ENCODE measurements at regions of chr1 and their contacts with region 1.

Region 1: GRCh38 chr1:20430355-20431175 is 55.4 kb downstream of the CAMK2N1 start:
- DNase-seq: no peak
- H3K4me3 ChIP-seq: no peak overlapping the region
- H3K27ac ChIP-seq: no peak overlapping the region
- H3K4me1 ChIP-seq: peaks cover 14% of the 10 kb centered on the region
- H3K27me3 ChIP-seq: no peaks in the 10 kb centered on the region
- CTCF ChIP-seq: peak; percentile 80 to 89

Region 2: GRCh38 chr1:19918057-19918456 is 512.5 kb before region 1 on chr1:
- CTCF ChIA-PET with region 1: no interaction called
- dilution Hi-C with region 1: no loop called
- in situ Hi-C with region 1: no loop called
- intact Hi-C with region 1: loop called (anchors 2 kb)
- DNase-seq: peak; percentile 60
- H3K4me3 ChIP-seq: no peak overlapping the region
- H3K27ac ChIP-seq: no peak overlapping the region
- H3K4me1 ChIP-seq: no peaks in the 10 kb centered on the region
- H3K27me3 ChIP-seq: no peaks in the 10 kb centered on the region
- CTCF ChIP-seq: peak; percentile 90 to 95

Region 3: DNA sequence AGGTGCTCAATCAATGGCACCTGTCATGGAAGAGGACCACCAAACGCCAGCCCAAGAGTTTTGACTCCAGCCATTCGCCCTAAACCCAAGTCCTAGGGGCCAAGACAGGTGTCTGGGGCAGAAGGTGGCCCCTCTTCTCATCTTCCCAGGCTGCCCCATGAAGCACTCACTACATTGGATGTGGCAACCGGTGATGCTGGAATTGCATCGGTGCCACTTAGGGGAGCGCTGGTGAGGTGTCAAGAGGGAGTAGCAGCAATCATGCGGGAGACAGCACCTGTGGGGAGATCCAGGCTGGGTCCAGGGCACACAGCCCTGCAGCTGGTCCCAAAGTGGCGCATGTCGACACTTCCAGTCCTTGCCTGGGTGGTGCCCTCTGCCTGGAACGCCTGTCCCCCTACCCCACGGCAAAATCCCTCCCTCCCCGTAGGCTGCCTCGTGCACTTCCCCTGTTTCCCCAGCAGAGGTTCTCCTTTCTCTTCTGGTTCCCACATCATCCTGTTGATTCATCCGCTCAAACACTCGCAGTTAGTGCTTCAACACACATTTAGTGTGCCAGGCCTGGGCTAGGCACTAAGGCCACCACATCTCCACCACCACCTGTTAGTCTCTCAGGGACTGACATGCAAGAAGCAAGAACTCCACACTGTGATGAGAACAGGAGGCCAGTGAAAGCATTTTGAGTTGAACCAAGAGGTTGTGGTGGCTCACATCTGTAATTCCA is 329.8 kb before region 1 on chr1:
- CTCF ChIA-PET with region 1: interaction called, 3 read pairs
- dilution Hi-C with region 1: no loop called
- in situ Hi-C with region 1: no loop called
- intact Hi-C with region 1: loop called (anchors 10 kb)
- DNase-seq: peak; percentile 57
- H3K4me3 ChIP-seq: no peak overlapping the region
- H3K27ac ChIP-seq: no peak overlapping the region
- H3K4me1 ChIP-seq: peaks cover 12% of the 10 kb centered on the region
- H3K27me3 ChIP-seq: no peaks in the 10 kb centered on the region
- CTCF ChIP-seq: peak; percentile 86 to 93

Region 4: DNA sequence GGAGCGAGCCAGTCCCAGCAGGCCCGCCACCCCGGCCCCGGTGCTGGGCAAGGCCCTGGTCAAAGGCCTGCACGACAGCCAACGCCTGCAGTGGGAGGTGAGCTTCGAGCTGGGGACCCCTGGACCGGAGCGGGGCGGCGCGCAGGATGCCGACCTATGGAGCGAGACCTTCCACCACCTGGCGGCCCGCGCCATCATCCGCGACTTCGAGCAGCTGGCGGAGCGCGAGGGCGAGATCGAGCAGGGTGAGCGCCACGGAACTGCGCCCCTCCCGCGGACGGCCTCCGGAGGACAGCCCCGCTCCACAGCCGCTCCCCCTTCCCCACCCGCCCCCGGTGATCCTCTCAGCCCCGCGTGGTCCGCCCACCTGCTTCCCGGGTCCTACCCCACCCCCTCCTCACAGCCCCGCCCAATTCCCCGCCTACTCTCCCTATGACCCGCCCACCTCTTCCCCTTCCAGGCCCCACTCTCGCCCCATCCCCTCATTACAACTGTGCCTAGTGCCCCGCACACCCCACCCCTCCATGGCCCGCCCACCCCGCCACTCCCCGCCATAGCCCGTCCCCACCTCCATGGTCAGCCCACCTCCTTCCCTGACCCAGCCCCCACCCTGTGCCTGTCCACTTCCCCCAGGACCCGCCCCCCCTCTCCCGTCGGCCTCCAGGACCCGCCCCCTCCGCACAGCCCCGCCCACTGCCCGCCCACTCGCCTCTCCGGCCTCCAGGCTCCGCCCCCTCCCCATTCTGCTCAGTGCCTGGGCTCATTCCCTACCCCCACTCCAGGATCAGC is 87.2 kb before region 1 on chr1:
- CTCF ChIA-PET with region 1: no interaction called
- dilution Hi-C with region 1: loop called (anchors 10 kb)
- in situ Hi-C with region 1: no loop called
- intact Hi-C with region 1: no loop called
- DNase-seq: no peak
- H3K4me3 ChIP-seq: peak overlapping the region in 1 of 3 experiments; percentile 22
- H3K27ac ChIP-seq: no peak overlapping the region
- H3K4me1 ChIP-seq: no peaks in the 10 kb centered on the region
- H3K27me3 ChIP-seq: no peaks in the 10 kb centered on the region
- CTCF ChIP-seq: no peak

Region 5: GRCh38 chr1:20376880-20377494 is 53.6 kb before region 1 on chr1:
- CTCF ChIA-PET with region 1: no interaction called
- dilution Hi-C with region 1: no loop called
- in situ Hi-C with region 1: no loop called
- intact Hi-C with region 1: loop called (anchors 1 kb)
- DNase-seq: peak; percentile 28
- H3K4me3 ChIP-seq: no peak overlapping the region
- H3K27ac ChIP-seq: no peak overlapping the region
- H3K4me1 ChIP-seq: peaks cover 29% of the 10 kb centered on the region
- H3K27me3 ChIP-seq: no peaks in the 10 kb centered on the region
- CTCF ChIP-seq: peak; percentile 82 to 86